Common myeloid progenitor, CD34-positive (primary cell): ENCODE measurements at regions of chr4 and their contacts with region 1.

Region 1: GRCh38 chr4:173318648-173319211 is 15.4 kb downstream of the HMGB2 start:
- DNase-seq: peak; percentile 47 to 71 (median 69)
- H3K4me3 ChIP-seq: no peak overlapping the region
- H3K27ac ChIP-seq: no peak overlapping the region
- H3K4me1 ChIP-seq: no peaks in the 10 kb centered on the region
- H3K27me3 ChIP-seq: no peaks in the 10 kb centered on the region

Region 2: GRCh38 chr4:173307778-173308177 is 11.0 kb before region 1 on chr4:
- CTCF ChIA-PET with region 1: interaction called, 11 read pairs
- POLR2A ChIA-PET with region 1: no interaction called
- DNase-seq: no peak
- H3K4me3 ChIP-seq: no peak overlapping the region
- H3K27ac ChIP-seq: no peak overlapping the region
- H3K4me1 ChIP-seq: no peaks in the 10 kb centered on the region
- H3K27me3 ChIP-seq: no peaks in the 10 kb centered on the region

Region 3: GRCh38 chr4:173334085-173334772 is 15.5 kb after region 1 on chr4 and contains the start of gene HMGB2:
- CTCF ChIA-PET with region 1: interaction called, 24 read pairs
- POLR2A ChIA-PET with region 1: interaction called, 3 read pairs
- DNase-seq: peak; percentile 100
- H3K4me3 ChIP-seq: peak within 1 kb of the TSS; percentile 78 to 99 (median 98)
- H3K27ac ChIP-seq: peak within 1 kb of the TSS; percentile 83 to 94
- H3K4me1 ChIP-seq: peaks cover 2 to 40% (median 28%) of the 10 kb centered on the region in 4 experiments
- H3K27me3 ChIP-seq: no peaks in the 10 kb centered on the region

Region 4: GRCh38 chr4:173357939-173358338 is 39.2 kb after region 1 on chr4:
- CTCF ChIA-PET with region 1: interaction called, 10 read pairs
- POLR2A ChIA-PET with region 1: no interaction called
- DNase-seq: no peak
- H3K4me3 ChIP-seq: no peak overlapping the region
- H3K27ac ChIP-seq: no peak overlapping the region
- H3K4me1 ChIP-seq: no peaks in the 10 kb centered on the region
- H3K27me3 ChIP-seq: no peaks in the 10 kb centered on the region